Sigmoid colon (tissue), 7 donors: ENCODE measurements at regions of chr5 and their contacts with region 1.

Region 1: DNA sequence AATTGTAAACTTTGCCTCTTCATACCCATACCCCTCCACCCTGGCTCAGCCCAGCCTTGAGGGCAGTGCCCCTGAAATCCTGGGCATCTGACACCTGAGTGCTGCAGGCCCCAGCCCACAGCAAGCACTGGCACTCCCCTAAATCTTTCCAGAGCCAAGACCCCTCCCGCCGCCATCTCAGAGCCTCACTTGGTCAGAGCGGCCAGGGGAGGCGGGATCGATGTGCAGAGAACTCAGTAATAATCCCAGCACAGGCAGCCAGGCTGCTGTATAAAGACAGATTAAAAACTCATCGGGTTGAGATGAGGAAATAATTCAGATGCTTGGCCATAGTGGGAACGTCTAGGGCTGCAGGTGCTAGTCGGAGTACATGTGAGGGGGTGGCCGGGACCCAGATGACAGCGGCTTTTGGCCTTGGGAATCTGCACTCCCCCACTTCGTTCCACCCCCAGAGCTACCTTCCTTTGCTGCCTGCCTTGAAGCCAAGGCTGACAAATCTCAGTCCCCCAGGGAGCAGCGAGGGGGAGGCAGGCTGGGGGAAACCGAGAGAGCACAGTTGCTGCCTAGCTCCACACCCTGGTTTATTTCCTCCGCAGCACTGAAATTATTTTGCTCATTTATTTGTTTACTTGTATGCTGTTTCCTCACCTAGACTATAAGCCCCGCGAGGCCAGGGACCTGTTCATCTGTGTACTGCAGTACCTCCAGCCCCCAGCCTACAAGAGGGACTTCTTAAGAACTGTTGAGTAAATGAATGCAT is 19.5 kb upstream of the ARAP3 start:
- DNase-seq: no peak
- H3K4me3 ChIP-seq: peak overlapping the region in 1 of 4 donors; percentile 49
- H3K27ac ChIP-seq: no peak overlapping the region
- H3K4me1 ChIP-seq: peaks cover 0 to 20% (median 19%) of the 10 kb centered on the region in 4 donors
- H3K27me3 ChIP-seq: peaks cover 22 to 85% (median 56%) of the 10 kb centered on the region in 3 donors
- CTCF ChIP-seq: no peak
- EP300 ChIP-seq: no peak
- POLR2A ChIP-seq: no peak

Region 2: GRCh38 chr5:141903261-141903660 is 201.7 kb after region 1 on chr5:
- intact Hi-C with region 1: no loop called
- DNase-seq: no peak
- H3K4me3 ChIP-seq: no peak overlapping the region
- H3K27ac ChIP-seq: no peak overlapping the region
- H3K4me1 ChIP-seq: no peaks in the 10 kb centered on the region
- H3K27me3 ChIP-seq: no peaks in the 10 kb centered on the region
- CTCF ChIP-seq: no peak
- EP300 ChIP-seq: no peak
- POLR2A ChIP-seq: no peak

Region 3: DNA sequence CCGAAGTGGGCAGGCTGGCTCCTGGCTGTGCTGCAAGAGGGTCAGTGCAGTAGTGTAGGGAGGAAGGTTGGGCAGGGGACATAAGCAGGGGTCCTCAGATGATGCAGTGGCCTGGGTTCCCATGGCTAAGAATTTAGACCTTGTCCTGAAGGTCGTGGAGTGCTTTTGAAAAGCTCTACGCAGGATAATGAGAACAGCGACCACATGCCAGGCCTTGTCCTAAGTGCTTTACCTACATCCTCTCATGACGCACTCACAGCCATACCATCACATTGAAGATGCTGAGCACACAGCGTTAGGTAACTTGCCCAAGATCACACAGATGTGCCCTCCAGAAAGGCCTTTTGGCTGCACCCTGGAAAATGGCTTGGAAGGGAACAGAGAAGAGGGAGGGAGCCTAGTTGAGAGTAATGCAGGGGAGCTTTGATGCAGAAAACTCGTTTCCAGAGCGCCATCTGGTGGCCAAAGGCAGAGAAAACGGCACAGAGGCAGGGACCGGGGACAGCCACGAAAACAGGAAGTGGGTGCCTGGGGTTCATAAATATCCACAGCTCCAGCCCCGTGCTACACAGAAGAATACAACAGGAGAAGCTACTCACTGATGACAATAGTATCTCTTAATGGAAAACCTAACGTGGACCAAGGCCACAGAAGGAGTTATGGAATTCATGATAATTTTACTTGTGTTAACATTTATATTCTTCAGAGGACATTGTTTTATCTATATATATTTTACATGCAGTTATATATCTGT is 259.1 kb after region 1 on chr5:
- intact Hi-C with region 1: loop called (anchors 2 kb)
- DNase-seq: peak; percentile 93
- H3K4me3 ChIP-seq: no peak overlapping the region
- H3K27ac ChIP-seq: peak overlapping the region in 1 of 4 donors; percentile 22
- H3K4me1 ChIP-seq: peaks cover 0 to 15% (median 0%) of the 10 kb centered on the region in 4 donors
- H3K27me3 ChIP-seq: no peaks in the 10 kb centered on the region
- CTCF ChIP-seq: peak; percentile 67 to 81 (median 74)
- EP300 ChIP-seq: no peak
- POLR2A ChIP-seq: no peak